ENCODE measurements at regions of chr12 and their contacts with region 1.

Region 1: DNA sequence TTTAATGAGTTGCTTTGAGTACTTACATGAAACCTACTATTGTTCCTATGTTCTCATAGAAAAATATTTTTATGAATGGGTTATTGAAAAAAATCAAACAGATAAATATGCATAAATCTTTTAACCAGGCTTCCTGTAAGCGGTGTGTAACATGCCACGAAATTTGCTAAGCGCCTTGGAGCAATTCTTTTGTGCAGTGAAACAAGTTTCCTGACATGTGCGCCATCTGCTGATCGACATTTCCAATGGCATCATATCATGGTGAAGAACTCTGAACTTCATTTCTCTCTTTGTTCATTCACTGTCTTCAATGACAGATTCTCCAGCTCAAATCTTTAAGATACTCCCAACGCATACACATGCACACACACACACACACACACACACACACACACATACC is 145.6 kb upstream of the NAV3 start:
- DNase-seq: peak; percentile 53 to 85
- H3K4me3 ChIP-seq: no peak overlapping the region
- CTCF ChIP-seq: no peak
- POLR2A ChIP-seq: no peak

Region 2: GRCh38 chr12:77049767-77050353 is 635.3 kb before region 1 on chr12:
- intact Hi-C with region 1: loop called (anchors 10 kb)
- DNase-seq: no peak
- H3K4me3 ChIP-seq: no peak overlapping the region
- CTCF ChIP-seq: no peak
- POLR2A ChIP-seq: no peak

Region 3: GRCh38 chr12:77152623-77153193 is 532.4 kb before region 1 on chr12:
- intact Hi-C with region 1: loop called (anchors 10 kb)
- DNase-seq: no peak
- H3K4me3 ChIP-seq: no peak overlapping the region
- CTCF ChIP-seq: no peak
- POLR2A ChIP-seq: no peak

Region 4: DNA sequence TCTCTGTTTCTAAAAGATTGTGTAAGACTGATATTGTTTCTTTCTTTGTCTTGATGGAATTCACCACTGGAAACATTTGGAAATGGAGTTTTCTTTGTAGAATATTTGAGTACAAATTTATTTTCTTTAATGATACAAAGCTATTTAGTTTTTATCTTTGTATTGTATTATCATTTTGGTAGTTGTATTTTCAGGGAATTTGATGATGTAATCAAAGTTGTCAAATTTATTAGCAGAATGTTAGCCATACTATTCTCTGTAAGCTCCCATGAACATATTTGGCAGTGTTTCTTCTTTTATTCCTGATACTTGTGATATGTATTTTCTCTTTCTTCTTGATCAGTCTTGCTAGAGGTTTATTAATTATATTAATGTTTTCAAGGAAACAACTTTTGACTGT is 16.0 kb after region 1 on chr12:
- intact Hi-C with region 1: no loop called
- DNase-seq: no peak
- H3K4me3 ChIP-seq: no peak overlapping the region
- CTCF ChIP-seq: no peak
- POLR2A ChIP-seq: no peak

Measured in lower leg skin (tissue), 4 donors.